ENCODE measurements at regions of chr5 and their contacts with region 1.

Region 1: DNA sequence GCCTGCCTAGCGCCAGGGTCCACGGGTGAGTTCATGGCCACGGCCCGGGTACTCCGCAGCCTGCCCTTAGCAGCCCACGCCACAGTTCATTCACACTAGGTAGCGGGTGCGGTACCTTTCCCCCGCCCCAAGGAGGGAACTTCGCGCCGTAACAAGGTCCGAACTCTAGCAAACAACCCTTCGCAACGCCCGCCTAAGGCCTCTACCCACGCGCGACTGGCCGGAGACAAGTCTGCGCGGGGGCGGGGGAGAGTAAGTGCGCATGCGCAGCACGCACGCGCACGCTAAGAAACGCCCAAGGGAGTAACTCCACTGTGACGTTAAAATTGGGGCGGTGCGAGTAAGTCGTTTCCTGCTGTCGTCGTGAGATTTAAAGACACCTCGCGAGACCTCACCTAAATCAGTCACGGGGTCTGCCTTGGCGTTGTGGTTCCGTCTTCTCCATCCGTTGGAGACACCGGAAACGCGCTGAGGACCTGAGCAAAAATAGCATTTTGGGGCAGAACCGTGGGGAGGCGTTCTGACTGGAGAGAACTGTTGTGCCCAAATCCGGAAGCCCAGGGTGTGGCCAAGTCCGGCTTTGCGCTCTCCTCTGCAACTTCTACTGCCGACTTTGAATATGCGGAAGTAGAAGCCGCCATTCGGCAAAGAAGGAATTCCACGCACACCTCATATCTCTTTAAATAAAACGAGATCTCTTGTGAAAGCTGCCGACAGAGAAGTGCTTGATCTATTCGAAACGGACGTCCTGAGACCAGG is at the start of gene RAPGEF6:
- DNase-seq: peak; percentile 98
- H3K4me3 Mint-ChIP-seq: peak within 1 kb of the TSS; percentile 95
- H3K27ac Mint-ChIP-seq: peak within 1 kb of the TSS; percentile 97
- H3K4me1 Mint-ChIP-seq: peaks cover 30% of the 10 kb centered on the region
- H3K27me3 Mint-ChIP-seq: no peaks in the 10 kb centered on the region
- total RNA-seq, gene RAPGEF6: 31.0 and 33.9 TPM in 2 replicates

Region 2: GRCh38 chr5:131170540-131171275 is 464.5 kb before region 1 on chr5 and contains the start of gene LYRM7:
- intact Hi-C with region 1: loop called (anchors 2 kb)
- DNase-seq: peak; percentile 97
- H3K4me3 Mint-ChIP-seq: peak within 1 kb of the TSS; percentile 99
- H3K27ac Mint-ChIP-seq: peak within 1 kb of the TSS; percentile 95
- H3K4me1 Mint-ChIP-seq: peaks cover 34% of the 10 kb centered on the region
- H3K27me3 Mint-ChIP-seq: no peaks in the 10 kb centered on the region
- total RNA-seq, gene LYRM7: 14.0 and 20.3 TPM in 2 replicates

Region 3: GRCh38 chr5:131382407-131383395 is 252.5 kb before region 1 on chr5:
- intact Hi-C with region 1: no loop called
- DNase-seq: peak; percentile 56
- H3K4me3 Mint-ChIP-seq: peak overlapping the region; percentile 40
- H3K27ac Mint-ChIP-seq: peak overlapping the region; percentile 97
- H3K4me1 Mint-ChIP-seq: peaks cover 80% of the 10 kb centered on the region
- H3K27me3 Mint-ChIP-seq: no peaks in the 10 kb centered on the region

Region 4: GRCh38 chr5:131536211-131536826 is 98.9 kb before region 1 on chr5:
- intact Hi-C with region 1: loop called (anchors 5 kb)
- DNase-seq: no peak
- H3K4me3 Mint-ChIP-seq: peak overlapping the region; percentile 45
- H3K27ac Mint-ChIP-seq: peak overlapping the region; percentile 67
- H3K4me1 Mint-ChIP-seq: peaks cover 58% of the 10 kb centered on the region
- H3K27me3 Mint-ChIP-seq: no peaks in the 10 kb centered on the region

Region 5: GRCh38 chr5:131610198-131611063 is 24.7 kb before region 1 on chr5:
- intact Hi-C with region 1: no loop called
- DNase-seq: no peak
- H3K4me3 Mint-ChIP-seq: no peak overlapping the region
- H3K27ac Mint-ChIP-seq: no peak overlapping the region
- H3K4me1 Mint-ChIP-seq: peaks cover 28% of the 10 kb centered on the region
- H3K27me3 Mint-ChIP-seq: no peaks in the 10 kb centered on the region

Region 6: DNA sequence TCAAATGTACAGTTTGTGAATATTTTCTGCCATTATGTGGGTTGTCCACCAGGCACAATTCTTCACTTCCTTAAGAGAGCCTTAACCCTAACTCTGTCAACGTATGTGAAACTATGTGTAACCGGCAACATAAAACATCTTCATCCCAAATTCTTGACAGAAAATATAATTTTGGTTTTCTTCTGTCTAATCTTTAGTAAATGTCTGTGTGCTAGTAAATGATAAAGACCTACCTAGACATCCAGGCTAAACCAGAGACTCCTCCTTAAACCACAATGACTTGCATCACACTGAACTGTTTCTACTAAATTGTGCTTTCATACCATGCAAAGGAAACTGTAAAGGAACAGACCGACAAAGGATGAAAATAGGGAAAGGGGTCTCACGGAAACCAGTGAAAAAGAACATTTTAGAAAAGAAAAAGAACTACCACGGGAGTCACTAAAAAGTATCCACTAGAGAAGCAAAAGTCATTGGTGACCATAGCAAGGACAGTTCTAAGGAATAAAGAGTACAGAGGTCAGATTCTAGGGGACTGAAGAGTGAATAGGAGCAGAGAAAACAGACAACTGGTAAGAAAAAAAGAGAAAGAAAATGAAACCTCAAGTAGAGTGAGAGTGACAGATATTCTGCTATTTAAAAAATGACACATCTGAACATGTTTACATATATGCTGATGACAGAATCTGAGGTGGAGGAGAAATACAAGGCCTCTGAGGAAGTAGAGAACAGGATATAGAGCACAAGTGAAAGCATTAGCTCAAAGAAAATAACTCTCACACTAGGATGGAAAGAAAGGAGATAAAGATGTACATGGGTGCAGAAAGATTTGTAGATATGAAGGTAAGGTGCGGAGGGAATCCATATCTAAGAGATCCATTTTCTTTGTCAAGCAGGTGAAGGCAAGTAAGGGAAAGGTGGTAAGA is 112.3 kb after region 1 on chr5:
- intact Hi-C with region 1: loop called (anchors 1 kb)
- DNase-seq: no peak
- H3K4me3 Mint-ChIP-seq: peak overlapping the region; percentile 61
- H3K27ac Mint-ChIP-seq: peak overlapping the region; percentile 88
- H3K4me1 Mint-ChIP-seq: peaks cover 40% of the 10 kb centered on the region
- H3K27me3 Mint-ChIP-seq: no peaks in the 10 kb centered on the region

Region 7: GRCh38 chr5:131846536-131846935 is 211.4 kb after region 1 on chr5:
- intact Hi-C with region 1: no loop called
- DNase-seq: no peak
- H3K4me3 Mint-ChIP-seq: no peak overlapping the region
- H3K27ac Mint-ChIP-seq: no peak overlapping the region
- H3K4me1 Mint-ChIP-seq: no peaks in the 10 kb centered on the region
- H3K27me3 Mint-ChIP-seq: peaks cover 2% of the 10 kb centered on the region

Region 8: DNA sequence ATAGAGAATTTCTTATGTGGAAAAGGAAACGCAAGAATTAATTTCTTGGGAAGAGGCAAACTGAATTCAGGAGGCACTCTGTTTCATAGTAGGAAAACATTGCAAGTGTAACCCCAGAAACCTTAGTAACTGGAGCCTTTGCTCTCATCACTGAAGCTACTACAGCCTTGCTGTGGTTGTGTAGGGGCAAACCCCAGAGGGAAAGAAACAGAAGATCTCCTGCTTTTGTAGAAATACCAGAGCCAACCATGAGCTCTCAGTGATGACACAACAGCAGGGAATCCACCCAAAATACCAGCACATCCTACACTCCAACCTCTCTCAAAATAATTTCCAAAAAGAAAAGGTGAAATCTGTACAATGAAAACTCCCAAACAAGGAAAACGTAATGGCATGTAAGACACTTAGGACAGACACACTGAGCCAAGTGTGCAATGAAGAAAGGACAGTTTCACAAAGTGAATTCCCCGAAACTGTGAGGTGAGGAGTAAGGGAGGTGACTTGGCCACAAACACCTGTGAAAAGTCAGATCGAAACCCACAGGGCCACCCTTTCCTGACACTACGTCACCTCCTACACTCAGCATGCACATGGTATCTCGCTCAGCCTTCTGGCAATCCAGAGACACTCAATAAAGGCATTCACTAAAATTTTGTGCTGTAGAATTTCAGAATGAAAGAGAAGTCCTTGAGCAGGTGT is 384.8 kb after region 1 on chr5:
- intact Hi-C with region 1: loop called (anchors 2 kb)
- DNase-seq: peak; percentile 82
- H3K4me3 Mint-ChIP-seq: peak overlapping the region; percentile 34
- H3K27ac Mint-ChIP-seq: peak overlapping the region; percentile 92
- H3K4me1 Mint-ChIP-seq: peaks cover 48% of the 10 kb centered on the region
- H3K27me3 Mint-ChIP-seq: peaks cover 24% of the 10 kb centered on the region